ENCODE measurements at regions of chr11 and their contacts with region 1.

Region 1: GRCh38 chr11:27158722-27159679 is 118.4 kb downstream of the BBOX1 start:
- DNase-seq: peak; percentile 48
- H3K4me3 ChIP-seq: no peak overlapping the region
- H3K27ac ChIP-seq: no peak overlapping the region
- H3K27me3 ChIP-seq: no peaks in the 10 kb centered on the region
- CTCF ChIP-seq: peak; percentile 89

Region 2: DNA sequence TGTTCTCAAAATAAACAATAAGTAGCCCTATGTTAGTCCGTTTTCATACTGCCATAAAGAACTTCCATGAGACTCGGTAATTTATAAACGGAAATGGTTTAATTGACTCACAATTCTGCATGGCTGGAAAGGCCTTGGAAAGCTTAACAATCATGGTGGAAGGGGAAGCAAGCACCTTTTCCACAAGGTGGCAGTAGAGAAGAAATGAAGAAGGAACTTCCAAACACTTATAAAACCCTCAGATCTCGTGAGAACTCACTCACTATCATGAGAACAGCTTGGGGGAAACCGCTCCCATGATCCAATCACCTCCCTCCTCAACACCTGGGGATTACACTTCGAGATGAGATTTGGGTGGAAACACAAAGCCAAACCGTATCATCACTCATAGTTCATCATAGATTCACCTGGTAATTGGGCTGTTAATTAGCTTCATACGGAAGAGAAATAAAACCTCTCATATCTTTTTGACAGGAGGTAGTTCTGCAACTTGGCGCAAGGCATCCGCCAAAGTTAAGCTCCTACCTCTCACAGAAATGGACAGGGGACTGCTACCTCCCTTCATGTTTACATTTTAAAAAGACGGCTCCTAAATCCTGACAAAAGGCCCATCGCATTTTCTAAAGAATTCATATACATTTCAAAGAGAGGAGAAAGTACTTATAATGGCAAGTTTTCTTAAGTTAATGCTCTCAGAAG is 635.9 kb before region 1 on chr11:
- CTCF ChIA-PET with region 1: interaction called, 13 read pairs
- POLR2A ChIA-PET with region 1: no interaction called
- DNase-seq: no peak
- H3K4me3 ChIP-seq: no peak overlapping the region
- H3K27ac ChIP-seq: no peak overlapping the region
- H3K27me3 ChIP-seq: no peaks in the 10 kb centered on the region
- CTCF ChIP-seq: peak; percentile 29

Region 3: GRCh38 chr11:26761361-26761809 is 397.6 kb before region 1 on chr11:
- CTCF ChIA-PET with region 1: interaction called, 49 read pairs
- POLR2A ChIA-PET with region 1: no interaction called
- DNase-seq: no peak
- H3K4me3 ChIP-seq: no peak overlapping the region
- H3K27ac ChIP-seq: no peak overlapping the region
- H3K27me3 ChIP-seq: no peaks in the 10 kb centered on the region
- CTCF ChIP-seq: no peak

Region 4: DNA sequence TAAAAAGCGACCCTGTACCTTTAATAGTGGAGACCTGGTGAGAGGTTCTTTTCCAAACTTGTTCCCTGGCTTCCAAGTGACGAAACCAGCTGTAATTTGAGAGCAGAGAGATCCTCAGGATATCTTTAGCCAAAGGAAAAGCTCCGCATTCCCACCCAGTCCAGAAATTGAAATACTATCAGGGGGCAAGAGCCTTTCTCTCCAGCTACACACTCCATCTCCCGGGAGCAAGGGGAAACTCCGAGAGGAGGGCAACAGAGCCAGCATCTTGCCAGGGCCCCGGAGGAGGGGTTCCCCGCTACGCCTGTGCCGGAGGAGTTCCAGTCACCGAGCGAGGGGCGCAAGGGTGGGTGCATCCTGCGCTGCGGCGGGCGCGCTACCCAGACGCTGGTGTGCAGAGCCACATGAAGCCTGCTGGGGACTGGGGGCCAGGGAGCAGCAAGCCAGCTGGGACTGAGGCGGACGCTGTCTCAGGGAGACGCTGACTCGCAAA is 165.0 kb before region 1 on chr11 and contains the start of gene FIBIN:
- CTCF ChIA-PET with region 1: interaction called, 14 read pairs
- POLR2A ChIA-PET with region 1: no interaction called
- DNase-seq: no peak
- H3K4me3 ChIP-seq: peak within 1 kb of the TSS; percentile 80
- H3K27ac ChIP-seq: no peak within 1 kb of the TSS
- H3K27me3 ChIP-seq: no peaks in the 10 kb centered on the region
- CTCF ChIP-seq: peak; percentile 13; the same call in 1 of the 2 replicates
- polyA plus RNA-seq, gene FIBIN: 44.4 and 49.0 TPM in 2 replicates

Region 5: GRCh38 chr11:27124514-27125264 is 34.3 kb before region 1 on chr11:
- CTCF ChIA-PET with region 1: interaction called, 20 read pairs
- POLR2A ChIA-PET with region 1: no interaction called
- DNase-seq: no peak
- H3K4me3 ChIP-seq: no peak overlapping the region
- H3K27ac ChIP-seq: no peak overlapping the region
- H3K27me3 ChIP-seq: no peaks in the 10 kb centered on the region
- CTCF ChIP-seq: peak; percentile 36

Region 6: DNA sequence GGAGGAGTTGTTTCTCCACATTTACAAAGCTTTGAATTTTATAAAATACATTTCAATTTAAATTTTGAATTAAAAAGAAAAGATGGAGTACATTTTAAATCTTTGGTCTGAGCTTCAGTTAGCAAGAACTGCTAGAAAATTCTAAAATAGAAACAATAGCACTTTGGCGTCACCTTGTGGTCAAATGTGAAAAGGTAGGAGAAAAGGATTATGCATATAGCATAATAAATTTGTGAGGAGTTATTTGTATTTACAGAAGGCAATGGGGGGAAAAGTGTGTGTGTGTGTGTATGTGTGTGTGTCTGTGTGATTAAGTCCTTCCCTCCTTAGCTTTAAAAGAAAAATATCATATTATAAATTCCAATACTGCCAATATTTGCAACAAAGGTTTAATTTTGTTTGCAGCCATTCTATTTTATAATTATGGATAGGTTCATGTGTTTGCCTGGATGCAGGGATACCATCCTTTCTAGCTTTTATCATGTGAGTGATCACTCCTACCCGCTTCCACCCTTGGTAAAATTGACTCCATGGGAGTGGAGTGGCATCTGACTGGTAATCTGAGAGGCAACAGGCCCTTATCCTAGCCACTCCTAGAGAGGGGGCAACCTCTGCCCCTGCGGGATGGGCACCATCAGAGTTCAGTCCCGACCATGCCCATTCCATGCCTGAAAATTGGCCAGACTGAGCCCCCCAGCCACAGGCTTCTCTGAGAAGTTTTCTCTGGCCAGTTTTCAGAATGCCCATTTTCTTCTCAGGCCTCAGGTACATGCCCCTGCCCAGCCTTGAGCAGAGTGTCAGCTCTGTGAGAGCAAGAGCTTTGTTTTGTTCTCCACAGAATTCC is 327.2 kb after region 1 on chr11:
- CTCF ChIA-PET with region 1: interaction called, 37 read pairs
- POLR2A ChIA-PET with region 1: no interaction called
- DNase-seq: no peak
- H3K4me3 ChIP-seq: no peak overlapping the region
- H3K27ac ChIP-seq: no peak overlapping the region
- H3K27me3 ChIP-seq: no peaks in the 10 kb centered on the region
- CTCF ChIP-seq: peak; percentile 95